ENCODE measurements at regions of chr17 and their contacts with region 1.

Region 1: GRCh38 chr17:79874329-79874981 is 35.2 kb upstream of the CBX4 start:
- DNase-seq: peak; percentile 81
- H3K4me3 Mint-ChIP-seq: no peak overlapping the region
- H3K27ac Mint-ChIP-seq: no peak overlapping the region
- H3K4me1 Mint-ChIP-seq: peaks cover 7% of the 10 kb centered on the region
- H3K27me3 Mint-ChIP-seq: peaks cover 11% of the 10 kb centered on the region

Region 2: GRCh38 chr17:79892459-79892858 is 18.0 kb after region 1 on chr17:
- intact Hi-C with region 1: no loop called
- DNase-seq: no peak
- H3K4me3 Mint-ChIP-seq: no peak overlapping the region
- H3K27ac Mint-ChIP-seq: no peak overlapping the region
- H3K4me1 Mint-ChIP-seq: no peaks in the 10 kb centered on the region
- H3K27me3 Mint-ChIP-seq: peaks cover 5% of the 10 kb centered on the region

Region 3: GRCh38 chr17:79942591-79943346 is 68.3 kb after region 1 on chr17:
- intact Hi-C with region 1: loop called (anchors 10 kb)
- DNase-seq: peak; percentile 75
- H3K4me3 Mint-ChIP-seq: peak overlapping the region; percentile 2
- H3K27ac Mint-ChIP-seq: peak overlapping the region; percentile 22
- H3K4me1 Mint-ChIP-seq: peaks cover 7% of the 10 kb centered on the region
- H3K27me3 Mint-ChIP-seq: peaks cover 3% of the 10 kb centered on the region